Left cardiac atrium (tissue), 4 donors: ENCODE measurements at regions of chr11 and their contacts with region 1.

Region 1: DNA sequence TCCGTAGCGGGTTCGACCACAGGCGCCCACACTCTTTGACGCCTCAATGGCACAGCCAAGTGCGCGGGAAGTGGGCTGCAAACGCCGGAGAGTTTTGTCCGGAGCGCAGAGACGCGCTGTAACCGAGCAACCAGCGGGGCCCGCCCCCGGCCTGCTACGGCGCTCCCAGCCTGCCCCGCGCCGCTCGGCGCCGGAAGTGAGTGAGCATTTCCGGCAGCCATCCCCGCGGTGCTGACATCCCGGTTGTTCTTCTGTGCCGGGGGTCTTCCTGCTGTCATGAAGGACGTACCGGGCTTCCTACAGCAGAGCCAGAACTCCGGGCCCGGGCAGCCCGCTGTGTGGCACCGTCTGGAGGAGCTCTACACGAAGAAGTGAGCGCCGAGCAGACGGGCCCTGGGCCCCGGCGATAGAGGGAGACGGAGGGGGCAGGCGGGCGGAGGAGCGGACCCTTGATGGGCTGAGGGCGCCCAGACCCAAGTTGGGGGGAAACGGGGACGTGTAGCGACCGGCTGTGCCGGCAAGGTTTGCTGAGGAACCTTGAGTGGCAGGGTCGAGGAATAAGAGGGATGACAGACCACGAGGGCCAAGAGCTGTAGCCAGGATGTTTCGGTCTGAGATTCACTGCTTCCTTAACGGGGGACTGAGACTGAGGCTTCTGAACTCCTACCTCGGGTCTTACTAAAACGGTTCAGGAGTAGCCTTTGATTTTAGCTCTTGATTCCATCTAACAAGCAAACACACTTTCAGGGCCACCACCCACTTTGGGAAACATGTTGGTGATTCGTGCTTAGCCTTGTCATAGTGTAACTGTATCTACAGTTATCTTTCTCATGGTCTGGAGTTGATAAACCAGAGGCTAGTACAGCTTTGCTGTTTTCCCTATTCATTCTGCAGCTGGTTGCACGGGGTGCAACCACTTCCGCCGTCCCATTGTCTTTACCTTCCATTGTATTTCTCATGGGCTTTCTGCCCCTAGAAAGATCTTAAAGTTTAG is at the start of gene PSMD13:
- DNase-seq: peak; percentile 91
- ATAC-seq: peak; percentile 95 to 97
- total RNA-seq, gene PSMD13: 75.5 to 87.3 TPM

Region 2: GRCh38 chr11:207208-207862 is 29.7 kb before region 1 on chr11 and contains the starts of genes BET1L and RIC8A:
- intact Hi-C with region 1: loop called in 1 of 2 experiments (anchors 2 kb)
- DNase-seq: peak; percentile 97
- ATAC-seq: peak; percentile 91 to 92
- total RNA-seq, gene BET1L: 27.6 to 44.5 TPM
- total RNA-seq, gene RIC8A: 54.1 to 67.4 TPM

Region 3: GRCh38 chr11:279966-280582 is 43.0 kb after region 1 on chr11:
- intact Hi-C with region 1: no loop called
- DNase-seq: no peak
- ATAC-seq: peak; percentile 35 to 65

Region 4: DNA sequence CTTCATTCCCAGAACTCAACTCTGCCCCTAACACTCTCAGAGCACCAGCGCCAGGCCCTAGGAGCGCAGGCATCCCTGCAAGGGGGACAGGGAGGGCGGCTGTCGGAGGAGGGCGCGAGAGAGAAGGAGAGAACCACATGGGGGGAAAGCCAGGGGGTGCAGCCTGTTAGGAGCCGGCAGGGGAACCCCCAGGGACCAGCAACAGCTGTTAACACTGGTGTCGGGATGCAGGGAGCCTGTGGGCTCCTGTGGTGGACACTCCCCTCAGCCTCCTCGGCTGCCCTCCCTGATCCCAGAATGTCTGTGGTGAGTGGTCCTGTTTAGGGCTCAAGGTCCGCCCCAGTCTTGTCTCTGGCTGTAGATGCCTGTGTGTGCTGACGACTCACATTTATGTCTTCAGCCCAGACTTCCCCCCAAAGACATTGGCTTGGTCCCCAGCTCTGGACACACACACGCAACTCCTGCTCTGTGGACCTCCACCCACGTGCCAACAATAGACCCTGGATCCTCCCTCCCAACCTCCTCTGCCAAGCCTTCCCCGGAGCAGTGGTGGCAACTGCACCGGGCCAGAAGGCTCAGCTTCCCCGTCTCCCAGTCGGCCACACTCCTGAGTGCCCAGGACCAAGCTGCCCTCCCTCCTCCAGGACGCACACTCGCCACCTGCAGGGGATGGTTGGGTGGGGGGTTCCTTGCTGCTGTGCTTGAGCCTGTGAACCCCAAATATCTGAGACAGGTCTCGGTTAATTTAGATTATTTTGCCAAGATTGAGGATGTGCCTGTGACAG is 63.1 kb after region 1 on chr11:
- intact Hi-C with region 1: loop called in 1 of 2 experiments (anchors 10 kb)
- DNase-seq: peak; percentile 37
- ATAC-seq: no peak

Region 5: GRCh38 chr11:674406-674805 is 437.3 kb after region 1 on chr11:
- intact Hi-C with region 1: no loop called
- DNase-seq: no peak
- ATAC-seq: no peak